ENCODE measurements at regions of chr11 and their contacts with region 1.

Region 1: GRCh38 chr11:6612213-6613041 is at the start of gene TAF10:
- DNase-seq: peak; percentile 99
- ATAC-seq: peak; percentile 94 to 96 (median 95)
- H3K4me3 ChIP-seq: peak within 1 kb of the TSS; percentile 52 to 93 (median 78)
- H3K27ac ChIP-seq: peak within 1 kb of the TSS; percentile 90 to 100 (median 98)
- H3K4me1 ChIP-seq: peaks cover 3 to 72% (median 35%) of the 10 kb centered on the region in 12 donors
- H3K27me3 ChIP-seq: no peaks in the 10 kb centered on the region
- CTCF ChIP-seq: peak in 11 of 12 donors; percentile 6 to 49 (median 36)
- POLR2A ChIP-seq: peak in 1 of 2 donors; percentile 94
- total RNA-seq, gene TAF10: 42.3 to 153 (median 99.0) TPM

Region 2: GRCh38 chr11:6473481-6474422 is 138.7 kb before region 1 on chr11 and contains the start of gene TRIM3:
- intact Hi-C with region 1: loop called in 2 of 10 experiments (anchors 5 kb)
- DNase-seq: peak; percentile 96 to 97 (median 96)
- ATAC-seq: peak; percentile 70 to 93 (median 88)
- H3K4me3 ChIP-seq: peak within 1 kb of the TSS; percentile 62 to 99 (median 86)
- H3K27ac ChIP-seq: peak within 1 kb of the TSS; percentile 84 to 97 (median 93)
- H3K4me1 ChIP-seq: peaks cover 0 to 35% (median 19%) of the 10 kb centered on the region in 12 donors
- H3K27me3 ChIP-seq: no peaks in the 10 kb centered on the region
- CTCF ChIP-seq: peak in 4 of 12 donors; percentile 23 to 47 (median 40)
- POLR2A ChIP-seq: peak; percentile 83 to 87
- total RNA-seq, gene TRIM3: 7.7 to 18.8 (median 10.4) TPM

Region 3: GRCh38 chr11:6655020-6655789 is 42.8 kb after region 1 on chr11:
- intact Hi-C with region 1: loop called in 1 of 10 experiments (anchors 5 kb)
- DNase-seq: peak in 4 of 5 donors; percentile 42 to 64 (median 50)
- ATAC-seq: peak; percentile 30 to 58 (median 53)
- H3K4me3 ChIP-seq: peak overlapping the region; percentile 20 to 68 (median 55)
- H3K27ac ChIP-seq: peak overlapping the region; percentile 1 to 93 (median 81)
- H3K4me1 ChIP-seq: peaks cover 0 to 51% (median 18%) of the 10 kb centered on the region in 12 donors
- H3K27me3 ChIP-seq: peaks cover 0 to 8% (median 0%) of the 10 kb centered on the region in 9 donors
- CTCF ChIP-seq: no peak
- POLR2A ChIP-seq: no peak